Activated CD8-positive, alpha-beta T cell treated with anti-CD3 and anti-CD28 coated beads, Interleukin-2, amount 10 ng/mL, durations not matched to agents 7 days and 5 days (primary cell): ENCODE measurements at regions of chr11 and their contacts with region 1.

Region 1: DNA sequence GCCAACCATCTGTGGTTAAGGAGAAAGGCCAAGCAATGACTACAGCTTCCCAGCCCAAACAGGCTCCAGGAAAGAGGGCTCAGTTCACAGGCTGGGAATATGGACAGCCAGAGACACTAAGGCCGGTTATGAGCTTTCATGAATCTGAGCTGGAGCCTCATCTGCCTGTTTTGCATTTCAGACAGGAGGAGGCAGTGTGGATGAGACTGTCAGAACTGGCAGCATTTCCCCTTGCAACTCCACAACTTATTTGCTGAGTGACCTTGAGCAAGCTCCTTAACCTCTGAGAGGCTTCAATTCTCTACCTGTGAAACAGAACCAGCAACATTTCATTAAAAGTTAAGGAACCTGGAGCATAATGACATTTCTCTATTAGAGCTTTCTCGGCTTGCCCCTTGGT is 264.0 kb downstream of the ETS1 start:
- DNase-seq: peak; percentile 73
- ATAC-seq: peak; percentile 25
- H3K4me3 Mint-ChIP-seq: peak overlapping the region; percentile 73
- H3K27ac Mint-ChIP-seq: peak overlapping the region; percentile 95
- H3K4me1 Mint-ChIP-seq: peaks cover 92% of the 10 kb centered on the region
- H3K27me3 Mint-ChIP-seq: no peaks in the 10 kb centered on the region

Region 2: GRCh38 chr11:128146926-128147605 is 176.3 kb before region 1 on chr11:
- CTCF ChIA-PET with region 1: no interaction called
- POLR2A ChIA-PET with region 1: no interaction called
- DNase-seq: no peak
- ATAC-seq: no peak
- H3K4me3 Mint-ChIP-seq: no peak overlapping the region
- H3K27ac Mint-ChIP-seq: no peak overlapping the region
- H3K4me1 Mint-ChIP-seq: no peaks in the 10 kb centered on the region
- H3K27me3 Mint-ChIP-seq: peaks cover 2% of the 10 kb centered on the region

Region 3: DNA sequence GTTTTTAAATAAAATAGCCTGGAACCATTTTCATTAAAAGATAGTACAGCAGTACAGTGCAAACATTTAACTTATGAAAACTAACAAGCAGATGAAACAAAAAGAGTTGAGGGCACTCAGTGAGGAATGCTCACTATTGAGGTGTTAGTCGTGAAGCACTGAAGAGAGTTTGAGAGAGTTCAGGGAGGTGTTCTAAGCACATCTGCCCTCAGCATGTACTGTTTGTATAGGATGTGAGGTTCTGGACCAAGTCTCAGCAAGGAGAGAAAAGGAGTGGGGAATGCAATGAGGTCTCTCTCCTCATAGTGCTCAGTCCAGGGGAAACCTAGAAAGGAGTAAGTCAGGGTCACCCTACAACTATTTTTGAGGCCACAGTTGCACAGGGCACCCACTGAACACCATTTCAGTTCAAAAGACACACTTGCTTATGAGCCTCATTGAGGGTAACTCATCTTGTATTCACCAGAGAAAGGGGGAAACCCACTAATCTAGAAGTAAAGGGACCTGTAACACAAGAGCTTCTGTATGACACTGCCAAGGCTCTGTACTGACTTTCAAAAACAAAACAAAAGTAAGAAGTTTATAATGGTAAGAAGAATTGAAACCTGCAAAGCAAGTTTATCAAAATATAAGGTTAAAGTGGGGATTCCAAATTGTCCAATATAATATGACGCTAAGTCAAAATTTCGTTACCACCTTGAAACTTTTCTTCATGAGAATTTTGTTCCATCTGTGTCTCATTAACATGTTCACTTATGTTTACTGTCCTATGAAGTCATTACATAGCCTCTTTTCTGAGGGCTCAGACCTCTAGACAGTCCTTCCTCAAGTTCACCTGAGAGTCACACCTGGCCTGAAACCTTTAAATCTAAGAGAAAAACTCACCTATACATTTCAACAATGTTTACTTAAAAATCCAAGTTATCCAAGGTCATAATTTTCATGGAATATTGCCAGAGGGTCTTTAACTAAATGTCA is 11.3 kb before region 1 on chr11:
- CTCF ChIA-PET with region 1: interaction called, 30 read pairs
- POLR2A ChIA-PET with region 1: interaction called, 5 read pairs
- DNase-seq: peak; percentile 17
- ATAC-seq: peak; percentile 28
- H3K4me3 Mint-ChIP-seq: no peak overlapping the region
- H3K27ac Mint-ChIP-seq: peak overlapping the region; percentile 11
- H3K4me1 Mint-ChIP-seq: peaks cover 77% of the 10 kb centered on the region
- H3K27me3 Mint-ChIP-seq: no peaks in the 10 kb centered on the region

Region 4: GRCh38 chr11:128342511-128343134 is 19.2 kb after region 1 on chr11:
- CTCF ChIA-PET with region 1: interaction called, 61 read pairs
- POLR2A ChIA-PET with region 1: interaction called, 18 read pairs
- DNase-seq: peak; percentile 61
- ATAC-seq: peak; percentile 62
- H3K4me3 Mint-ChIP-seq: peak overlapping the region; percentile 7
- H3K27ac Mint-ChIP-seq: peak overlapping the region; percentile 96
- H3K4me1 Mint-ChIP-seq: peaks cover 70% of the 10 kb centered on the region
- H3K27me3 Mint-ChIP-seq: no peaks in the 10 kb centered on the region

Region 5: GRCh38 chr11:128422576-128423370 is 99.4 kb after region 1 on chr11:
- CTCF ChIA-PET with region 1: interaction called, 14 read pairs
- POLR2A ChIA-PET with region 1: interaction called, 4 read pairs
- DNase-seq: peak; percentile 85
- ATAC-seq: peak; percentile 94
- H3K4me3 Mint-ChIP-seq: peak overlapping the region; percentile 19
- H3K27ac Mint-ChIP-seq: peak overlapping the region; percentile 76
- H3K4me1 Mint-ChIP-seq: peaks cover 27% of the 10 kb centered on the region
- H3K27me3 Mint-ChIP-seq: no peaks in the 10 kb centered on the region

Region 6: GRCh38 chr11:128472128-128473089 is 149.0 kb after region 1 on chr11:
- CTCF ChIA-PET with region 1: interaction called, 77 read pairs
- POLR2A ChIA-PET with region 1: interaction called, 15 read pairs
- DNase-seq: peak; percentile 69
- ATAC-seq: peak; percentile 55
- H3K4me3 Mint-ChIP-seq: peak overlapping the region; percentile 56
- H3K27ac Mint-ChIP-seq: peak overlapping the region; percentile 85
- H3K4me1 Mint-ChIP-seq: peaks cover 98% of the 10 kb centered on the region
- H3K27me3 Mint-ChIP-seq: no peaks in the 10 kb centered on the region

Region 7: DNA sequence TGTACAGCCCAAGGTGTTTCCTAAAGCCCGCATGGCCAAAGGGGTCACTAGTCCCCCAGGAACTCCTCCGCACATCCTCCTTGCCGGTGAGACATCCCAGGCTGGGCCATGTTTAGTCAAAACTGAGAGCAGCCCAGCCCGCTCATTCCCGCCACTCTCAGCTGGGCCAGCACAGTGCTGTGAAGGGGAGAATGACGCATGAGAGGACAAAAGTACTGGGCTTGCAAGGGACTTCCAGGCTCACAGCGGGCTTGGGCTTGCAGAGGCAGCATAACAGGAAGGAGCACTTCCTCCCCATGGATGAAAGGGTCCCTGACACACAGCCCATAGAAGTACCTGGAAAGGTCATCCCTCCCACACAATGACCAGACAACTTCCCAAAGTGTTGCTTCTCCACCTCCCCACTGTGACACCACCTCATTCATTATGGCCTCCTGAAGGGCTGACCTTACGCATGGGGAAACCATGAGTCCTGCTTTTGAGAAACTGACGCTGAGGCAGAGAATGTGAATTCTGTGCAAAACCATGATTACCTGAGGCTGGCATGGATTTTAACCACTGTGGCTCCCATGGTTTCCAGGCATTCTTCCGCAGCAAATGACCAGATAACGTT is 244.9 kb after region 1 on chr11:
- CTCF ChIA-PET with region 1: no interaction called
- POLR2A ChIA-PET with region 1: no interaction called
- DNase-seq: no peak
- ATAC-seq: no peak
- H3K4me3 Mint-ChIP-seq: no peak overlapping the region
- H3K27ac Mint-ChIP-seq: no peak overlapping the region
- H3K4me1 Mint-ChIP-seq: peaks cover 8% of the 10 kb centered on the region
- H3K27me3 Mint-ChIP-seq: peaks cover 2% of the 10 kb centered on the region